ENCODE measurements at regions of chr4 and their contacts with region 1.

Region 1: GRCh38 chr4:122764821-122765215 is 32.3 kb downstream of the BBS12 start:
- DNase-seq: peak; percentile 53
- ATAC-seq: peak; percentile 42; the same call in 1 of the 2 replicates
- H3K4me3 ChIP-seq: no peak overlapping the region
- H3K27ac ChIP-seq: peak overlapping the region; percentile 28
- H3K4me1 ChIP-seq: peaks cover 16% of the 10 kb centered on the region
- H3K27me3 ChIP-seq: no peaks in the 10 kb centered on the region
- CTCF ChIP-seq: no peak

Region 2: DNA sequence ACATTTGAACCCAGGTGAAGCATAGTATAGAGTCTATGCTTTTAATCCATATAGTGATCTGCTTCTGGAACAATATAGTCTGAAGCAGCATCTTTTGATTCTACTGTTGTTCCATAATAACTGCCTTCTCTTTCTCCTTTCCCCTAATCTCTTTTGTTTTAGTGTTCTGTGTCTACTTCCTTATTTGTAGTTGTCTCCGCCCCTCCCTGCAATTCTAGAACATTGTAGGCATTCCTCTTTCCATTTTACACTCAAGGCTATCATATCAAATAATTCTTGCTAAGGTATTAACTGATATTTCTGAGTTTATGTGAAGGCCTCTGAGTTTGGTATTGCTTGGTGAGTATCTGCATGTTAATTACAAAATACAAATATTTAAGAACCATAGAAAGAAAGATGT is 601.1 kb before region 1 on chr4:
- CTCF ChIA-PET with region 1: no interaction called
- POLR2A ChIA-PET with region 1: no interaction called
- intact Hi-C with region 1: no loop called
- DNase-seq: no peak
- ATAC-seq: no peak
- H3K4me3 ChIP-seq: no peak overlapping the region
- H3K27ac ChIP-seq: no peak overlapping the region
- H3K4me1 ChIP-seq: no peaks in the 10 kb centered on the region
- H3K27me3 ChIP-seq: no peaks in the 10 kb centered on the region
- CTCF ChIP-seq: no peak

Region 3: GRCh38 chr4:122508083-122508482 is 256.7 kb before region 1 on chr4:
- CTCF ChIA-PET with region 1: no interaction called
- POLR2A ChIA-PET with region 1: no interaction called
- intact Hi-C with region 1: no loop called
- DNase-seq: peak; percentile 51
- ATAC-seq: peak; percentile 68
- H3K4me3 ChIP-seq: no peak overlapping the region; the same call in 1 of the 2 replicates
- H3K27ac ChIP-seq: no peak overlapping the region
- H3K4me1 ChIP-seq: peaks cover 10% of the 10 kb centered on the region
- H3K27me3 ChIP-seq: peaks cover 8% of the 10 kb centered on the region
- CTCF ChIP-seq: no peak

Region 4: DNA sequence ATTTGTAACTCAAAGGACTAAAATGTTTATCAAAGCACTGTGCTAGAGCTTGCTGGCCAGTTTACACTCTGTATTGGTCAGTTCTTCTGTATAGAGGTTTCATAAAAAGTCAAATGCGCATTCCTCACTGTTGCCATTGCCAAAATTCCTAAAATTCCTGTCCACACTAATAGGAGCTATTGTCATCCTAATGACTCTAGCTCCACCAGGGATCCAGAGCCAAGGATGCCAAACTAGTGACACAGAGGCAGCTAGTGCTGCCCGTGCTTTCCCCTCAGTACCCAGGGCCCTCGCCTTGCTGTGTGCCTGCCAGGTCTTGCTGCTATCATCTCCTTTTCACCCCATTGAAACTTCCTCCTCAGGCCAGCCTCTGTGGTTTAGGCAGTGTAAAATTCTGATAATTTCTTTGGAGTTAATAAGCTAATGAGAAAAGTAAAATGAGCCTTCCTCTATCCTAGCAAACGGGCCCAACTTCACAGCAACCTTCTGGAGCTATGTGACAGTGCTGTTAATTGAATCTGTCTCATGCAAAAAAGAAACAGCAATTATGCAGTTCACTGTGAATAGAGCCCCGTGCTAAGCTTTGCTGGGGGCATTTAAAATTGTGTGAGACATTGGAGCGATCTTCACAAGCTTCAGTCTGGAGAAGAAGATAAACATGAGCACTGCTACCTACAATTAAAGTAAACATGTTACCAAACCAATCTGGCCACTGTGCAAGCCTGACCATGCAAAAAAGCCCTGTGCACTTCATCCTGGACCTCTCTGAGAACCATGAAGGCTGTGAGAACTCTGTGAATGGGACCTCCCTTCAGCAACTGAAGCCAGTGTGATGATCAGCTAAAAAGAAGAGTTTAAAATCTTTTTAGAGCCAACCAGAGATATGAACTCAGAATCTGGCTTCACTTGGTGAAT is 18.7 kb after region 1 on chr4:
- CTCF ChIA-PET with region 1: no interaction called
- POLR2A ChIA-PET with region 1: no interaction called
- intact Hi-C with region 1: loop called (anchors 2 kb)
- DNase-seq: peak; percentile 95
- ATAC-seq: peak; percentile 98
- H3K4me3 ChIP-seq: peak overlapping the region; percentile 37; the same call in 1 of the 2 replicates
- H3K27ac ChIP-seq: peak overlapping the region; percentile 65
- H3K4me1 ChIP-seq: peaks cover 30% of the 10 kb centered on the region
- H3K27me3 ChIP-seq: no peaks in the 10 kb centered on the region
- CTCF ChIP-seq: no peak

Region 5: GRCh38 chr4:122798101-122798500 is 33.3 kb after region 1 on chr4:
- CTCF ChIA-PET with region 1: no interaction called
- POLR2A ChIA-PET with region 1: interaction called, 16 read pairs
- intact Hi-C with region 1: no loop called
- DNase-seq: no peak
- ATAC-seq: no peak
- H3K4me3 ChIP-seq: no peak overlapping the region
- H3K27ac ChIP-seq: no peak overlapping the region
- H3K4me1 ChIP-seq: no peaks in the 10 kb centered on the region
- H3K27me3 ChIP-seq: no peaks in the 10 kb centered on the region
- CTCF ChIP-seq: no peak

Region 6: DNA sequence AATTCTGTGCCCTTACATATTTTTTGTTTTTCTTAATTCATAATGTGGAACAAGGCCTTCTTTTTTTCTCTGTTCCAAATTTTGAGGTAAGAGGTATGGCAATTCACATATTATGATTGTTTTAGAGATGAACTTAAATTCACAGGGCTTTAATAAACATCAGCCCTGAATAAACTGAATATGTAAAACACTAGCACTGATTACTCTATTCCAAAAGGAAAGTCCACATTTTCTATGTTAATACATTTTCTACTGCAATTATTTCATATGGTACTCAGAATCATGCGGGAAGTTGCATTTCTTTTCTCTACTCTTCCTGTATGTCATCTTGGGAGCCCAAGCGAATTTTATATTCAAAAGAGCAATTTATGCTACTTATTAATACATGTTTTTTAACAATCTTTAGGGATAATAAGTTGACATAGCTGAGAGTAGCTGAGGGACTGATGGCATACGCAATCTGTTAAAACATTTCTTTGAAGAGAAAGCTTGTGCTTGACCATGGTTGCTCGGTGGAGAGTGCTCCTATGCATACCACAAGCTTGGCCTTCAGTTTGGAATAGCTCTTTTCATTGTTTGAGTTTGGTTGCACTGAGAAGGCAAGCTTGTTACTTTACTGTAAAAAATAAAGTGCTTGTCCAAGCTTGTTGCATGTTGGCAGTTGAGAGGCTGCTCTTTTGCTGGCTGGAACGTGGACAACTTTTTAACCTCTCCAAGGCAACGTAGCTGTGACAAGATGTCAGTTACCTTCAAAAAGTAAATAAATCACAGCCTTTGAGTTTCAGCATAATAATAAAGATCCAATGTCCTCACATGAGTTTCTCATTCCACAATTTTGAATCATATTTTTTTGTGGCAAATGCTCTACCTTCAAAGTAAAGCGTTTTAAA is 435.5 kb after region 1 on chr4:
- CTCF ChIA-PET with region 1: no interaction called
- POLR2A ChIA-PET with region 1: no interaction called
- intact Hi-C with region 1: no loop called
- DNase-seq: no peak
- ATAC-seq: no peak
- H3K4me3 ChIP-seq: no peak overlapping the region
- H3K27ac ChIP-seq: no peak overlapping the region
- H3K4me1 ChIP-seq: no peaks in the 10 kb centered on the region
- H3K27me3 ChIP-seq: no peaks in the 10 kb centered on the region
- CTCF ChIP-seq: no peak

Region 7: DNA sequence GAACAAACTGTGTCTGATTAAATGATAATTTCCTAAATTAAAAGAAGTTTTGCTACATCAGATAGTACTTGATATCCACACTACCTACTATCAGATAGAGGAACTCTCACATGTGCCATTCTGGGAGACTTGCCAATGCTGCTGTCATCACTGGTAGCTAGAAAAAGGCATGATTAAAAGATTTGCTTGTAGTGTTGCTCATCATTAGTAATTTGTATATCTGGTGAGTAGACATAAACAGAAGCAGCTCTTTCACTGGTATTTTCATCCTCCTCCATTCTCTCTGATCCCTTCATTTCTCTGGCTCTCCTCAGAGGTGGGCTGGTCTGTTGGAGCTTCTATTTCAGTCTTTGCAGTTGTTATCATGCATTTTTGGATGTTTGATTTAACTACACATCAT is 687.8 kb after region 1 on chr4:
- CTCF ChIA-PET with region 1: no interaction called
- POLR2A ChIA-PET with region 1: no interaction called
- intact Hi-C with region 1: no loop called
- DNase-seq: peak; percentile 90
- ATAC-seq: peak; percentile 30
- H3K4me3 ChIP-seq: no peak overlapping the region
- H3K27ac ChIP-seq: peak overlapping the region; percentile 46
- H3K4me1 ChIP-seq: peaks cover 36% of the 10 kb centered on the region
- H3K27me3 ChIP-seq: no peaks in the 10 kb centered on the region
- CTCF ChIP-seq: no peak